GM12878 (cell line): ENCODE measurements at regions of chr3 and their contacts with region 1.

Region 1: GRCh38 chr3:15345608-15346137 is 13.3 kb upstream of the SH3BP5 start:
- DNase-seq: peak; percentile 86
- ATAC-seq: peak; percentile 94
- H3K4me3 ChIP-seq: no peak overlapping the region
- H3K27ac ChIP-seq: peak overlapping the region; percentile 83
- H3K4me1 ChIP-seq: peaks cover 42% of the 10 kb centered on the region
- H3K27me3 ChIP-seq: no peaks in the 10 kb centered on the region
- CTCF ChIP-seq: no peak
- EP300 ChIP-seq: peak; percentile 85 to 88
- POLR2A ChIP-seq: peak; percentile 59
- RAD21 ChIP-seq: no peak

Region 2: DNA sequence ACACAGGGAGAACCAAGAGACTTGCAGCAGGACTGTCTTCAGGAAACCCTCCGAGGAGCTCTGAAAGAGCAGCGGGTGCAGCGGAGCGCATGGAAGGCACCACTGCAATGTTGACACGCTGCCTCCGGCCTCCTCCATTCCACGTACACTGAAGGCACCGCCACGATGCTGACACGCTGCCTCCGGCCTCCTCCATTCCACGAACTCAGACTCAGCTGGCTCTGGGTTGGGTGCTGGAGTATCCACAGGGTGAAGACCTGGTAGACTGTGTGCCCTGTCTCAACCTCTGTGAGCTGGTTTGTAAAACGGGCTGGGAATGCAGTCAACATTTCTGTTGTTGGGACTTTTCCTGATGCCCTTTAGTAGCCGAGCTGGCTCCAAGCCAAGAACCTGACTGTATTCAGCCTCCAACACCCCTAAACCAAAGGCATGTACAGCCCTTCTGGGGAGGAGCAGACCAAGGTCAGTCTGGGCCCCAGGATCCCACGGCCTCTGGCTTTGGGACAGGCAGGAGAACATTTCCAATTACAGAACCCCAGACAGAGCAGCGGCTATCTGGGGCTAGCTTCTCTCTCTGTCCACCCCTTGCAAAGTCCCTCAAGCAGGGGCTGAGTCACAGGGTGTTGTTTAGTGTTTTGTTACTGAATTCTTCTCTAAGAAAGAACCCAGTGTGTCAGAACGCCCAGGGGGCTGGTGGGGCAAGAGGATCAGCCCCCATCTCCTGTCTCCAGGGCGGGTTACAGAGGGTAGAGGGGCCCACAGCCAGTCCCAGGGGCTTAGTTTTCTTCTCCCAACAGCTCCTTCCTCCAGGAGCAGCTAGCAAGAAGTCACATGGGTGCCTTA is 1000.1 kb before region 1 on chr3:
- CTCF ChIA-PET with region 1: no interaction called
- POLR2A ChIA-PET with region 1: no interaction called
- RAD21 ChIA-PET with region 1: no interaction called
- SMC1A ChIA-PET with region 1: no interaction called
- in situ Hi-C with region 1: no loop called
- intact Hi-C with region 1: no loop called
- DNase-seq: no peak
- ATAC-seq: no peak
- H3K4me3 ChIP-seq: no peak overlapping the region
- H3K27ac ChIP-seq: no peak overlapping the region
- H3K4me1 ChIP-seq: no peaks in the 10 kb centered on the region
- H3K27me3 ChIP-seq: peaks cover 0 to 3% of the 10 kb centered on the region in 2 experiments; a peak in 3 of 4 replicates
- CTCF ChIP-seq: no peak
- EP300 ChIP-seq: no peak
- POLR2A ChIP-seq: no peak
- RAD21 ChIP-seq: no peak

Region 3: GRCh38 chr3:15356186-15356585 is 10.5 kb after region 1 on chr3:
- CTCF ChIA-PET with region 1: interaction called, 14 read pairs
- POLR2A ChIA-PET with region 1: interaction called, 16 read pairs
- RAD21 ChIA-PET with region 1: interaction called, 35 read pairs
- SMC1A ChIA-PET with region 1: interaction called, 23 read pairs
- in situ Hi-C with region 1: no loop called
- intact Hi-C with region 1: loop called (anchors 1 kb)
- DNase-seq: no peak
- ATAC-seq: no peak
- H3K4me3 ChIP-seq: no peak overlapping the region
- H3K27ac ChIP-seq: peak overlapping the region; percentile 67
- H3K4me1 ChIP-seq: peaks cover 37% of the 10 kb centered on the region
- H3K27me3 ChIP-seq: no peaks in the 10 kb centered on the region
- CTCF ChIP-seq: no peak
- EP300 ChIP-seq: no peak
- POLR2A ChIP-seq: no peak
- RAD21 ChIP-seq: no peak